Activated CD4-positive, alpha-beta T cell treated with anti-CD3 and anti-CD28 coated beads, Interleukin-2, amount 10 ng/mL, durations not matched to agents 24 days and 14 days (primary cell): ENCODE measurements at regions of chr1 and their contacts with region 1.

Region 1: DNA sequence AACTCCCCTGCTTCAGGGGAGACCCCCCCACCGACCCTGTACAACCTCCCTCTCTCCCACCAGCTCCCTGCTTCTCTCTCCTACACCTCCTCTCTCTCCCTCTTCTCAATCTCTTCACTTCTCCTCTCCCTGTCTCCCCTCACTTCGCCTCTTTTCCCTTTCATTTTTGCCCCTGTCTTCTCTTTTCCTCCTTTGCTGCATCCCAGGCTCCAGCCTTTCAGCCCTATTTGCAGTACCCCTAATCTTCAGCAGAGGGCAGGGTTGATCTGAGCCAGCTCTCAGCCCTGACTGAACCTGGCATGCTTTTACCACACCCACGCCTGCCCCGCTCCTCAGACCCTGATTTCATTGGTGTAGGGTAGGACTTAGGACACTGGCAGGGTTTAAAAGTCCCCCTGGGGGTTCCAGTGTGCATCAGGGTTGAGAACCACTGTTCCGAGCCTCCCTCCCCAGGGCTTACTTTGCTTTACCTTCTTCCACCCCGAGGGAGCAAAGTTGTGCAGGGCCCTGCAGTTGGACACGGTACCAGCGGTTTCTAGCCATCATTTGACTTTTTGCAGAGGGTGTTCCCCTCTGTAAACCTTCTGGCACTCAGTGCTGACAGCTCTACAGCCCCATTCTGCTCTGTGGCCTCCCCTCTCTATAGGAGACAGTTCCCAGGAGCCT is 67.3 kb upstream of the CNTN2 start:
- DNase-seq: peak; percentile 86
- H3K4me3 Mint-ChIP-seq: no peak overlapping the region
- H3K27ac Mint-ChIP-seq: no peak overlapping the region
- H3K4me1 Mint-ChIP-seq: peaks cover 9% of the 10 kb centered on the region
- H3K27me3 Mint-ChIP-seq: peaks cover 16% of the 10 kb centered on the region

Region 2: DNA sequence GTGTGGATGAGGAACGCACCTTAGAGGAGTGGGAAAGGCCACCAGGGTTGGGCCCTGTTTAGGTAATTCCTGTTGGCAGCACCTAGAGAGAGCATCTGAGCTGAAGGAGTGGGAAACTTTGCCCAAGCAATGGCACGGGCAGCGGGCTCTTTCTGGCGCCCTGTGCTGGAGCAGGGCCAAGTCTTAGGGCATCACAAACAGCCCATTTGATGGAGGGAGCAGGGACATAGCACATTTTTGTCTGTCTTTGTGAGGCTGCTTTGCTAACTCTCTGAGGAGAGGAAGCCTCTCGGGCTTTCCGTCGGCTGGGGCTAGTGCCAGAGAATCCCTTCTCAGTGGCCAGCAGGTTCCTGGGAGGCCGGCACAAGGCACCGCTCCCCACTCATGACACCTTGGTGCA is 44.8 kb after region 1 on chr1:
- intact Hi-C with region 1: no loop called
- DNase-seq: no peak
- H3K4me3 Mint-ChIP-seq: no peak overlapping the region
- H3K27ac Mint-ChIP-seq: no peak overlapping the region
- H3K4me1 Mint-ChIP-seq: no peaks in the 10 kb centered on the region
- H3K27me3 Mint-ChIP-seq: peaks cover 2% of the 10 kb centered on the region

Region 3: GRCh38 chr1:205061665-205062069 is 86.0 kb after region 1 on chr1:
- intact Hi-C with region 1: loop called (anchors 1 kb)
- DNase-seq: peak; percentile 92
- H3K4me3 Mint-ChIP-seq: no peak overlapping the region
- H3K27ac Mint-ChIP-seq: no peak overlapping the region
- H3K4me1 Mint-ChIP-seq: no peaks in the 10 kb centered on the region
- H3K27me3 Mint-ChIP-seq: peaks cover 1% of the 10 kb centered on the region

Region 4: DNA sequence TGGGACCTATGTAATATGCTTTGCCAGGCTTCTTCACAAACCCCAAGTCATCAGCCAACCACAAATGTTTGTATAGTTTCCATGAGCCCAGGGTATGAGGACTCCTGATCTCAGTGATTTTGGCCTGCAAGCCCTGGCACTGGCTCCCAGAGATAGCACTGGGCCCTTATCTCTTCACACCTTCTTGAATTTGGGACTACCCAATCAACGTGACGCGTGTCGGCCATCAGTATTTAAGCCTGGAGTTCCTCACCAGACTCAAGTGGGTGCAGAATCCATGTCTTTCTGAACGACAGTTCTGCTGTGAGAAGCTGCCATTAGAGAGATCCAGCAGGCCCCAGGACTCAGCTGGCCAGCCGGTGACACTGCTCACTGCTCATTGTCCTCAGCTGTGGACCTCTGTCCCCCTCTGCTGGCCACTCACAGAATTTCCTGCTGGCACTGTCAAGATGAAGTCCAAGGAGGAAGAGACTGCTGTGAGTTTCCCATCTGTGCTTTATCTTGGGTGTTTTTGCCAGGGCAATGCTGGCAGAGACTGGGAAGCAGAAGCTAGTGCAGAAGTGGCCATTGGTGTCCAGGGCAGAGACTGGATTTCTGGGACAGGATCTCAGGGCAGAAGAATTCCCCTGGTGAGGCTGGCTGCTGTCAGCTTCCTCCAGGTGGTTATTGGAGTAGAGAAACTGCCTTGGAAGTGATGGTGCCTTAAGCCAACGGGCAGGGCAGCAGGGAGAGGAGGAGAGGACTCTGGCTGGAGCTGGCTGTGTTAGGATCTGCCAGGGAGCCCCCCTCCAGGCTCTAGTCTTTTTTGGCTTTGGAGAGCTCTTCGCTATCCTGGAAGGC is 280.5 kb after region 1 on chr1:
- intact Hi-C with region 1: loop called (anchors 1 kb)
- DNase-seq: peak; percentile 96
- H3K4me3 Mint-ChIP-seq: no peak overlapping the region
- H3K27ac Mint-ChIP-seq: no peak overlapping the region
- H3K4me1 Mint-ChIP-seq: peaks cover 5% of the 10 kb centered on the region
- H3K27me3 Mint-ChIP-seq: no peaks in the 10 kb centered on the region

Region 5: GRCh38 chr1:205335643-205336091 is 360.0 kb after region 1 on chr1:
- intact Hi-C with region 1: loop called (anchors 10 kb)
- DNase-seq: peak; percentile 93
- H3K4me3 Mint-ChIP-seq: no peak overlapping the region
- H3K27ac Mint-ChIP-seq: no peak overlapping the region
- H3K4me1 Mint-ChIP-seq: no peaks in the 10 kb centered on the region
- H3K27me3 Mint-ChIP-seq: peaks cover 38% of the 10 kb centered on the region